H1 (cell line): ENCODE measurements at regions of chr11 and their contacts with region 1.

Region 1: GRCh38 chr11:45771566-45772448 is 33.1 kb upstream of the SLC35C1 start:
- DNase-seq: peak in 1 of 2 experiments; percentile 94
- H3K4me3 ChIP-seq: peak overlapping the region; percentile 18 to 62 (median 56); a peak in 7 of 8 replicates
- H3K27ac ChIP-seq: no peak overlapping the region
- H3K4me1 ChIP-seq: no peaks in the 10 kb centered on the region; a peak in 1 of 7 replicates
- H3K27me3 ChIP-seq: peaks cover 0 to 6% (median 5%) of the 10 kb centered on the region in 4 experiments; a peak in 6 of 7 replicates
- CTCF ChIP-seq: peak; percentile 86 to 95 (median 91)
- EP300 ChIP-seq: no peak
- POLR2A ChIP-seq: no peak
- RAD21 ChIP-seq: peak; percentile 96 to 98

Region 2: DNA sequence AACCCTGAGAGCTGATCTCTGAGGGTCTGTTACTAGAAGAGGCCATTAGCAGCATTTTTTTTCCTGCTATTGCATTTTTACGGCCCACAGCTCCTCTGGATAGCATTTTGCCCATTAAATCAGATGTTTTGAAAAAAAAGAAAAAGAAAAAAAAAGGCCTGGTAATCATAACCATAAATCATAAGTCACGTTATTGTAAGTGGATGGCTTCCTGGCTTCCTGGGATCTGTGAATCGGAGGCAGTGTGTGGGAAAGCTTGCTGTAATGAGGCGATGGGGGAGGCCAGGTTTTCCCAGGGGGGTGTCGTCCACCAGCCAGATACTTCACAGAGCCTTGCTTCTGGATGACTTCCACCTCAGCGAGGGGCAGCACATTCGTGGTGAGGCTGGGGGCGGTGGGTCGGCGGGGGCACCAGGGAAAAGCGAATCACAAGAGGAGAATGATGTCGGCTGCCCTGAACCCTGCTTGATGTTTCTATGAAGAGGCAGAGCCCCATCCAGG is 379.2 kb before region 1 on chr11:
- CTCF ChIA-PET with region 1: interaction called, 10 read pairs
- POLR2A ChIA-PET with region 1: no interaction called
- DNase-seq: no peak
- H3K4me3 ChIP-seq: no peak overlapping the region
- H3K27ac ChIP-seq: no peak overlapping the region
- H3K4me1 ChIP-seq: peaks cover 0 to 3% (median 0%) of the 10 kb centered on the region in 4 experiments; a peak in 1 of 7 replicates
- H3K27me3 ChIP-seq: no peaks in the 10 kb centered on the region; a peak in 1 of 7 replicates
- CTCF ChIP-seq: no peak
- EP300 ChIP-seq: no peak
- POLR2A ChIP-seq: no peak
- RAD21 ChIP-seq: no peak

Region 3: DNA sequence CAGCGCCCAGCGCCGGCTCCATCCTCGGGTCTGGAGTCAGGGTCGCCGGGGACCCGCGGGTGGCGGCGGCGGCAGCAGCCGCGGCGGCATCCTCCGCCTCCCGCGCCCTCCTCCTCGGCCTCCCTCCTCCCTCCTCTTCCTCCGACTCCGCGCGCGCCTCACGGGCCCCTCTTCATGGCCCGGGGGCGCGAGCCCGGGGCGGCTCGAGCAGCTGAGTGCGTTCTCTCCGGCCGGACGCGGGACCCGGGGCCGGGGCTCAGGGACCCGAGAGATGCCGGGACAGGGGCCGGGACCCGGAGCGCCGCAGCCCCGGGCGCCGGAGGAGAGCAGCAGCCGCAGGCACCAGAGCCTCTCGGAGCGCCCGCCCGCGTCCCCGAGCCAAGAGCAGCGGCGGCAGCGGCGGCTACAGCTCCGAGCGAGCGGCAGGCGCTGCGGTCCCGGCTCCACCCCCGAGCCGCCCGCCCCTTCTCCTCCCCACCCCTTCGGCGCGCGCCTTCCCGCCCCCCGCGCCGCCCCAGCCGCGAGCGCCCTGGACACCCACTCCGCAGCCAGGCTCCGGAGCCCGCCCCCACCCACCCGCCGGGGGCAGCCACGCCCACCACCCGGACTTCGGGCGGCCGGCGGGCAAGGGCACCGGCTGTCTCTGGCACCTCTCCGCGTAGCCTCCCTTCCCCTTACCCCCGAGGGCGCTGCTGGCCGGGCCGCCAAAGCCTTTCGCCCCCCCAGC is 106.4 kb before region 1 on chr11 and contains the start of gene CHST1:
- CTCF ChIA-PET with region 1: interaction called, 89 read pairs
- POLR2A ChIA-PET with region 1: no interaction called
- DNase-seq: peak in 1 of 2 experiments; percentile 64
- H3K4me3 ChIP-seq: peak within 1 kb of the TSS; percentile 52 to 78 (median 54)
- H3K27ac ChIP-seq: no peak within 1 kb of the TSS; the same call in 1 of the 2 replicates
- H3K4me1 ChIP-seq: peaks cover 0 to 17% (median 12%) of the 10 kb centered on the region in 4 experiments; a peak in 6 of 7 replicates
- H3K27me3 ChIP-seq: peaks cover 11 to 46% (median 37%) of the 10 kb centered on the region in 4 experiments
- CTCF ChIP-seq: no peak
- EP300 ChIP-seq: no peak
- POLR2A ChIP-seq: no peak
- RAD21 ChIP-seq: no peak
- total RNA-seq, gene CHST1: 1.6 and 3.8 TPM in 2 replicates

Region 4: DNA sequence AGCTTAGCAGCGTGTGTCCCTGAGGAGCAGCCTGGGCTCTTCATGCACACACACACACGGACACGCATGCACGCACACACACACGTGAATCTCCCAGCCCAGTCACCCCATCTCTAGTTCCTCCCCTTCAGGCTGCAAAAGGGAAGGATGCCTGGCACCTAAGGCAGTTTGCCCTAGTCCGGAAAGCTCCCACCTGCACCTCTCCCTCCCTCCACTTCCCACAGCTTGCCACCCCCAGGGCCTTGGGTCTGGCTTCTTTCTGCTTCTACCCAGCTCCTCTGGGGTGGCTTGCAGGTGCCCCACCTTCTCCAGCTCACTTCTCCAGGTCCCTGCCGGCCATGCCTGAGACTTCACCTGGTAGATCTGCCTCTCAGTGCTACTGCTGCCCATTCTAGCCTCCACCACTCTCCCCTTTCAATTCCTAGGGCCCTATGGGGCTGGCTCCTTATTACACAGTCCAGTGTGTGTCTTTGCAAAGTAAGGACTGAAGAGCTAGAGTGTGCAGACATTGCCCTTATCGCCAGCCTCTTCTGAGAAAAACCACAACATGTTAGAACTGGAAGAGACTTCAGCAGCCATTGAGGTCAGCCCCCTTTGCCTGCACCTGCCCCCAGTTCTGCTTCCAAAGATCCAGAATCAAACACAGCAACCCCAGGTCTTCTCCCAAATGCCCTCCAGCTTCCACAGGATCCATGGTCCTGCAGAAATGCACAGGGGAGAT is 72.9 kb before region 1 on chr11:
- CTCF ChIA-PET with region 1: interaction called, 46 read pairs
- POLR2A ChIA-PET with region 1: interaction called, 3 read pairs
- DNase-seq: no peak
- H3K4me3 ChIP-seq: no peak overlapping the region
- H3K27ac ChIP-seq: no peak overlapping the region
- H3K4me1 ChIP-seq: no peaks in the 10 kb centered on the region; a peak in 1 of 7 replicates
- H3K27me3 ChIP-seq: peaks cover 0 to 5% (median 0%) of the 10 kb centered on the region in 4 experiments; a peak in 1 of 7 replicates
- CTCF ChIP-seq: no peak
- EP300 ChIP-seq: no peak
- POLR2A ChIP-seq: no peak
- RAD21 ChIP-seq: no peak

Region 5: GRCh38 chr11:45761659-45762058 is 10.1 kb before region 1 on chr11:
- CTCF ChIA-PET with region 1: interaction called, 85 read pairs
- POLR2A ChIA-PET with region 1: interaction called, 4 read pairs
- DNase-seq: no peak
- H3K4me3 ChIP-seq: no peak overlapping the region
- H3K27ac ChIP-seq: no peak overlapping the region
- H3K4me1 ChIP-seq: peaks cover 0 to 2% (median 0%) of the 10 kb centered on the region in 4 experiments; a peak in 1 of 7 replicates
- H3K27me3 ChIP-seq: no peaks in the 10 kb centered on the region; a peak in 1 of 7 replicates
- CTCF ChIP-seq: no peak
- EP300 ChIP-seq: no peak
- POLR2A ChIP-seq: no peak
- RAD21 ChIP-seq: no peak

Region 6: DNA sequence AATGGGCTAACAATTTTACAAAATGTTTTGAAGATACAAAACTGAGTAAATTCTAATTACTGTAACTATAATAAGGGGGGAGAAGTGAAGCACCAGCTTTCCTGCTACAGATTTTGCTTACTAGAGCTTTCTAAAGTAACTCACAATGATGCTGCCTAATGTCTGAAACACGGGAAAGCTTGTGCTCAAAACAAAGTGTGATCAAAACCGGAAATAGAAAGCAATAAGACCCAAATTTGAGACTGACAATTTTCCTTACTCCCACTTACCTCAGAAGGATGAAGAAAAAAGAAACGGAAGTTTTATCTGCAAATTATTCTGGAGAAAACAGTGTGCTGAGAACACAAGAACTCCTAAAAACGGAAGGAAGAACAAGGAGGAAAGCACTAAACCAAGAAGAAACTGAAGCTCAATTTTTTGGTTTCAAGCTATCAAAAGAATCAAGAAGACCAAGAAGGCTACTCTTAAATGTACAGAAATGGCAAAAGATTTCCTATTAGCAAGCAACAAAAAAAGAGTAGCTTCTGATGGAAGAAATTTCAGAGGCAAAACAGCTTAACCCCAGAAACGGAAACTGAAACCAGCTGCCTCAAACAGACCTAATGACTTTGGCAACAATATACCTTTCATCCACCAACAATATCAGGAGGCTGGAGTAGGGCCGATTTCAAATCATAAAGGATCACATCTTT is 788.6 kb after region 1 on chr11:
- CTCF ChIA-PET with region 1: no interaction called
- POLR2A ChIA-PET with region 1: no interaction called
- DNase-seq: no peak
- H3K4me3 ChIP-seq: no peak overlapping the region
- H3K27ac ChIP-seq: no peak overlapping the region
- H3K4me1 ChIP-seq: no peaks in the 10 kb centered on the region; a peak in 2 of 7 replicates
- H3K27me3 ChIP-seq: no peaks in the 10 kb centered on the region
- CTCF ChIP-seq: no peak
- EP300 ChIP-seq: no peak
- POLR2A ChIP-seq: no peak
- RAD21 ChIP-seq: no peak